ENCODE measurements at regions of chr3 and their contacts with region 1.

Region 1: DNA sequence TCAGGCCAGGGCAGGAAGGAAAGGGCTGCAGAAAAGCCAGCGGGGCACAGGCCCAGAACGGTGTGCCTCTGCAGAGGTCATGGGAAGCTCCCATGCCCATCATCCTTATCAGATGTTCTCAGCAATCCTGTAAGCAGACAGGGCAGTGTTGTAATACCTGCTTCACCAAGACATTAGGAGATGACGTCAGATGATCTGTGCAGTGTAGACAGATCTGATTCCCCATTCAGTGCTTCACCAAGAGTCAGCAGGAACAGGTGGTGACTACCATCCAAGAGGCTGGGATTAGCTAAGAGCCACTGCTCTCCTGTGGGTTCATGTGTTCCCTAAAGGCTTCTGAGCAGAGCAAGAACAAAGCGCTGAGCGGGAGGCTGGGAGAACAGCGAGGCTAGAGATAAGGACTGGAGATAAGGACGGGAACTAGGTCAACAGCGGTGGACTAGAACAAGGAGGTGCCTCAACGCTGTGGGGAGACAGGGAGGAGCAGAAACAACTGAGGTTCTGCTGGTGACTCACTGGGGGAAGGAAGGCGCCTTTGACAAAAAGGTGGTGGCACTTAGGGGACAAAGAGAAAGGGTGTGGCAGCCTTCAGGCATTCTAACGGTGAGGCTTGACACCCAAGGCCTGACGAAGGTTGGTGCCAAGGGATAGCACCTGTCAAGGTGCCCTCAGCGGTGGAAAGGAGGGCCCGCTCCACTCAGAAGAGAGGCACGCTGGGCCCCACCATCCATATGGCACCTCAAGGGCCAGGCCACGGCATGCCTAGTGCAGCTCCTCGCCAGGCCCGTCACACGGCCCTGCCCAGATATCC is 28.4 kb downstream of the CCDC12 start:
- DNase-seq: peak; percentile 61
- H3K4me3 ChIP-seq: no peak overlapping the region
- H3K27ac ChIP-seq: peak overlapping the region; percentile 86
- H3K4me1 ChIP-seq: peaks cover 60% of the 10 kb centered on the region
- H3K27me3 ChIP-seq: no peaks in the 10 kb centered on the region
- CTCF ChIP-seq: no peak

Region 2: GRCh38 chr3:45795882-45796765 is 1152.1 kb before region 1 on chr3 and contains the start of gene SLC6A20:
- CTCF ChIA-PET with region 1: no interaction called
- dilution Hi-C with region 1: no loop called
- in situ Hi-C with region 1: no loop called
- intact Hi-C with region 1: no loop called
- DNase-seq: no peak
- H3K4me3 ChIP-seq: peak within 1 kb of the TSS; percentile 18 to 59 (median 54)
- H3K27ac ChIP-seq: no peak within 1 kb of the TSS
- H3K4me1 ChIP-seq: peaks cover 5% of the 10 kb centered on the region
- H3K27me3 ChIP-seq: peaks cover 16% of the 10 kb centered on the region
- CTCF ChIP-seq: no peak
- total RNA-seq, gene SLC6A20: 1.7 TPM in 1 of 2 donors, not detected in the other

Region 3: DNA sequence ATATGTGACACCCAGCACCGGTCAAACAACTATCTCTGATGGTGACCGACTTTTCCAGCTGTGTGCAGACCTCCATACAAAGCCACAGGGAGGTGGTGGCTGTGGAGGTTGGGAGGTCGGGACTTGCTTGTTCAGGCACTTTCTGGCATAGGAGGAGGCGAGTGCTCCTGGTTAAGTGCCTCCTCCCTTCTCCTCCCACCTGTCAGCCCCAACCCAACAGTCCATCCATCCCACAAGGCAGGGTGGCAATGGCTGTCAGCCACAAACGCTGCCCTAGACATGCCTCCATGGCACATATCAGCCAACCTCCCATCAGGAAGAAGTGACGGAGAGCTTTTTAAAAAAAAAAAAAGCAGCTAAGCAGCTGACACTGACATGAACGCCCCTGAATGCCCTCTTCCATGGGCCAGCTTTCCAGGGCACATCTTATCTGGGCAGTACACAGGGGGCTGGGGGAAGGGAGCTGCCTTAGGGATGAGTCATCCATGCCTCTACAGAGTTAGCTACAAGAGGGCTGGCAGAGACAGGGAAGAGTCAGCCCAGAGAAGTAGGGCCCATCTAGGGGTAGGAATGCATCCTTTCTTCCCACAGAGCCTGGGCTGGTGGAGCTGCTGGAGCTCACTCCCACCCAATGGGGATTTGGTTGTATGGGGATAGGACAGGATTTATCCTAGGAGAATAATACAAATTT is 12.9 kb before region 1 on chr3:
- CTCF ChIA-PET with region 1: interaction called, 8 read pairs
- dilution Hi-C with region 1: no loop called
- in situ Hi-C with region 1: no loop called
- intact Hi-C with region 1: loop called (anchors 1 kb)
- DNase-seq: peak; percentile 87
- H3K4me3 ChIP-seq: no peak overlapping the region
- H3K27ac ChIP-seq: peak overlapping the region; percentile 91
- H3K4me1 ChIP-seq: peaks cover 69% of the 10 kb centered on the region
- H3K27me3 ChIP-seq: no peaks in the 10 kb centered on the region
- CTCF ChIP-seq: peak; percentile 83 to 88

Region 4: GRCh38 chr3:46960081-46960701 is 12.0 kb after region 1 on chr3:
- CTCF ChIA-PET with region 1: no interaction called
- dilution Hi-C with region 1: no loop called
- in situ Hi-C with region 1: no loop called
- intact Hi-C with region 1: loop called (anchors 2 kb)
- DNase-seq: peak; percentile 87
- H3K4me3 ChIP-seq: no peak overlapping the region
- H3K27ac ChIP-seq: peak overlapping the region; percentile 49
- H3K4me1 ChIP-seq: peaks cover 40% of the 10 kb centered on the region
- H3K27me3 ChIP-seq: no peaks in the 10 kb centered on the region
- CTCF ChIP-seq: no peak

Region 5: DNA sequence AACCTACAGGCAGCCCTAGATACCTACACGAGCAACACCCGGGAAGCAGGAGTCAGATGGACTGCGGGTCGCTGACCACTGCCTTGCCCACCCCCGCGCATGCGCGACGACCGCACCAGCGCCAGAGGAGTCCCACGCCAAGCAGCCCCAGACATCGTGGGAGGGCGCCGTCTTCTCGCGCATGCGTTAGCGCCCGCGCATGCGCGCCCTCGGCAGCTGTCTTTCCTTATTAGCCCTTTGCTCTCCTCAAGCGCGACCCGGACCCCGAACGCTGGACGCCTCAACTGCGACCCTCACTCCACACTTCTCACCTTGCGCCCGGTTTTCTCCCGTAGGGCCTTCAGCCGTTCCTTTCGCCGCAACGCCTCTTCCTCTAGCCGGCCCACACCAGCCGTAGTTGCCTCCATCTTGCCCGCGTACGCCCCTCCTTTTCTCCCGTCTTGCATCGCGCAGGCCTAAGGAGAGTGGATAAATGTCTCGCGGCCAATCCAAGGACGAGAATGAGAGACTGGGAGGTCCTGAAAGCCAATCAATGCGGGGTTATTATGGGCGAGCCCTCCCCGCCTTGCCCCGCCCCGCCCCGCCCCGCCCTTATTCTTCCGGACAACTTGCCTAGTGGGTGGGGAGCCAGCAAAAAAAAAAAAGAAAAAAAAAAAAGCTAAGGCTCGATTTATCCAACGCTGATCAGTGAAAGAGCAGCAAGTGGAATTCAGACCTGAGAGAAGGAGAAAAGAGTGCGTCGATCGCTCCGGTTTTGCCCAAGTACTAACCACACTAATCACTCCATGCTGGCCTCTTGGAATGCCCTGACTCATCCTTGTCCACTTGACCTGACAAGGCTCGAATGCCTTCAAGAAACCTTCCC is 28.4 kb after region 1 on chr3 and contains the start of gene CCDC12:
- CTCF ChIA-PET with region 1: no interaction called
- dilution Hi-C with region 1: no loop called
- in situ Hi-C with region 1: no loop called
- intact Hi-C with region 1: loop called (anchors 1 kb)
- DNase-seq: peak; percentile 98
- H3K4me3 ChIP-seq: peak within 1 kb of the TSS; percentile 57 to 96 (median 81)
- H3K27ac ChIP-seq: peak within 1 kb of the TSS; percentile 94
- H3K4me1 ChIP-seq: peaks cover 43% of the 10 kb centered on the region
- H3K27me3 ChIP-seq: no peaks in the 10 kb centered on the region
- CTCF ChIP-seq: no peak
- total RNA-seq, gene CCDC12: 17.8 to 42.1 TPM

Region 6: DNA sequence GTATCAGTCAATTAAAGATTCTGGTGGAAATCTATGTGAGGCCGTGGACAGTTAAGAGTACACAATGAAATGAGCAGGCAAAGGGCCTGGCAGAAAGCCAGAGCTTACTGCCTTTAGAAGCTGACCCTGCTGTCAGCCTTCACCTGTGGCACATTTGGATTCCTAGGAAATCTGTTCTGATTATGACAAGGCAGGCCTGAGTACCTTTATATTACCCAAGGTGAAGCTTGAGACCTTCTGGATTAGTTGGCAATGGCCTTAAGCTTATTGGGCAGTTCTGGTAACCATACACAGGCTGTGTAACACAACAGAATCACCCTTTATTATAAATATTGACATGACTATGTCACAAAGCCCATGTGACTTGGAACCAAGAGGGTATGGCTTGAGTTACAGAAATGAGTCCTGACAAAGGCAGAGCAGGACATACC is 74.5 kb after region 1 on chr3:
- CTCF ChIA-PET with region 1: no interaction called
- dilution Hi-C with region 1: loop called (anchors 5 kb)
- in situ Hi-C with region 1: no loop called
- intact Hi-C with region 1: no loop called
- DNase-seq: no peak
- H3K4me3 ChIP-seq: no peak overlapping the region
- H3K27ac ChIP-seq: no peak overlapping the region
- H3K4me1 ChIP-seq: peaks cover 18% of the 10 kb centered on the region
- H3K27me3 ChIP-seq: no peaks in the 10 kb centered on the region
- CTCF ChIP-seq: no peak